GM12878 (cell line): ENCODE measurements at regions of chr11 and their contacts with region 1.

Region 1: DNA sequence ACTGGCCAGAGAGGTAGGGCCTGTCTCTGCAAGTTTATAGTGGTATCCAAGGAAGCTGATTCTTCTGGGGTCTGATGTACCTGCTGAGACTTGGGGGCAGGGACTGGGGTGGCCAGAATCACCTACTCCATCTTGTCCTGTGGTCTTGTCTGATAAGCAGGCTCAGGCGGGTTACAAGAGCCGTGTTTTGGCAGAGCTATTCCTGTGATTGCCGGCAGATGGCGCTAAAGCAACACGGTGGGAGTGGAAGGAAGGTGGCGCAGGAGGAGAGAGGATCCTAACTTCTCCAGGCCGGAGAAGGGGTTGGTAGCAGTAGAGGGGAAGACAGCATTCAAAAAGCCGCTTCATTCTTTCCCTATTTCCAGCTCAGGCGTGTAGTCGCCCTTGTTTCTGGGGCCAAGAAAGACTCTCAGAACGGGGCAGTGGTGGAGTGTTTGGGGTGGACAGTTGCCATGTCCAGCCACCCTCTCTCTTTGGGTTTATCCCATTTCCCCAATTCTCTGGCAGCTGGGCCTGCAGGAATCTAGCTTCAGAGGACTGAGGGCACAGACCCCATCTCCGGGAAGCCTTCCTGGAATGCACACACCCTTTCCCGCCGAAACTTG is 15.1 kb downstream of the CHRM1 start:
- DNase-seq: peak; percentile 46
- ATAC-seq: peak; percentile 92
- H3K4me3 ChIP-seq: no peak overlapping the region
- H3K27ac ChIP-seq: no peak overlapping the region
- H3K4me1 ChIP-seq: peaks cover 10% of the 10 kb centered on the region
- H3K27me3 ChIP-seq: peaks cover 0 to 3% of the 10 kb centered on the region in 2 experiments
- CTCF ChIP-seq: peak; percentile 99
- EP300 ChIP-seq: no peak
- POLR2A ChIP-seq: no peak
- RAD21 ChIP-seq: peak; percentile 99

Region 2: GRCh38 chr11:62880803-62881578 is 25.0 kb before region 1 on chr11 and contains the start of gene SLC3A2:
- CTCF ChIA-PET with region 1: interaction called, 16 read pairs
- POLR2A ChIA-PET with region 1: interaction called, 3 read pairs
- RAD21 ChIA-PET with region 1: no interaction called
- SMC1A ChIA-PET with region 1: interaction called, 3 read pairs
- in situ Hi-C with region 1: no loop called
- intact Hi-C with region 1: no loop called
- DNase-seq: peak; percentile 47
- ATAC-seq: peak; percentile 92
- H3K4me3 ChIP-seq: peak within 1 kb of the TSS; percentile 91
- H3K27ac ChIP-seq: peak within 1 kb of the TSS; percentile 95
- H3K4me1 ChIP-seq: peaks cover 15% of the 10 kb centered on the region
- H3K27me3 ChIP-seq: no peaks in the 10 kb centered on the region
- CTCF ChIP-seq: peak; percentile 64 to 86 (median 83)
- EP300 ChIP-seq: peak in 1 of 2 experiments; percentile 17; a peak in 1 of 4 replicates
- POLR2A ChIP-seq: peak; percentile 94
- RAD21 ChIP-seq: peak; percentile 58
- polyA plus RNA-seq, gene SLC3A2: 6.9 to 17.0 TPM

Region 3: DNA sequence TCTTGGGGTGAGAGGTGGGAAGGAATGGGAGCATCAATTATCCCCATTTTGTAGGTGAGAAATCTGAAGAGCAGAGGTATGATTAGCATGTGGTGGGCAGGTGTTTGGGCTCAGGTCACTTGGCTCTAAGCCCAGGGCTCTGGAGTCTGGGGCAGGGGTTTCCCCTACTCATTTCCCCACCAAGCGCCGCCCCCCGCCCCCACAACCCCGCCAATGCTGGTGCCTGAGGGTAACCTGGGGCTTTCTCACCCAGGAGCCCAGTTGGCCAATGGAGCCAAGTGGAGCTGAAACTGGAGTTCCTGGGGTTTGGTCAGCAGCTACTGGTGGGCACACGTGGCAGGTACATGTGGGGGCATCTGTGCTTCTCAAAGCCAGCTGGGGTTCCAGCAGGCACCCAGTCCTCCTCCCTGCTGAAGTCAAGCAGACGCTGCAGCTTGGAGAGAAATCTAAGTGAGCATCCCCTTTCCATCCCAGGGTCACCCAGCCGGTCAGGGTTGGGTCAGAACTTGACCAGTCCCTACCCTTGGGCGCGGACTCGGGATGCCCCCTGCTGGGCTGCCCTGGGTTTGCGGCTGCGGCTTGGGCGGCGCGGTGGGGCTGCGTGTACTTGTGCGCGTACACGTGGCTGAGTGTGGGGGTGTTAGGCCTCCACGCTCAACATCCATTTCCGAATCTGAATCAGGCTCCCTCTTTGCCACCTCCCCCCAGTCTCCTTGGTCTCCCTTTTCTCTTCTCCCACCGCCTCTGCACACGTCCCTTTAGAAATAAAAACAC is 16.8 kb after region 1 on chr11:
- CTCF ChIA-PET with region 1: interaction called, 45 read pairs
- POLR2A ChIA-PET with region 1: interaction called, 3 read pairs
- RAD21 ChIA-PET with region 1: interaction called, 5 read pairs
- SMC1A ChIA-PET with region 1: interaction called, 8 read pairs
- in situ Hi-C with region 1: no loop called
- intact Hi-C with region 1: no loop called
- DNase-seq: no peak
- ATAC-seq: peak; percentile 73
- H3K4me3 ChIP-seq: no peak overlapping the region
- H3K27ac ChIP-seq: no peak overlapping the region
- H3K4me1 ChIP-seq: peaks cover 19% of the 10 kb centered on the region
- H3K27me3 ChIP-seq: peaks cover 12 to 20% of the 10 kb centered on the region in 2 experiments
- CTCF ChIP-seq: peak; percentile 31 to 57 (median 45)
- EP300 ChIP-seq: no peak
- POLR2A ChIP-seq: no peak
- RAD21 ChIP-seq: peak; percentile 28; the same call in 1 of the 2 replicates

Region 4: DNA sequence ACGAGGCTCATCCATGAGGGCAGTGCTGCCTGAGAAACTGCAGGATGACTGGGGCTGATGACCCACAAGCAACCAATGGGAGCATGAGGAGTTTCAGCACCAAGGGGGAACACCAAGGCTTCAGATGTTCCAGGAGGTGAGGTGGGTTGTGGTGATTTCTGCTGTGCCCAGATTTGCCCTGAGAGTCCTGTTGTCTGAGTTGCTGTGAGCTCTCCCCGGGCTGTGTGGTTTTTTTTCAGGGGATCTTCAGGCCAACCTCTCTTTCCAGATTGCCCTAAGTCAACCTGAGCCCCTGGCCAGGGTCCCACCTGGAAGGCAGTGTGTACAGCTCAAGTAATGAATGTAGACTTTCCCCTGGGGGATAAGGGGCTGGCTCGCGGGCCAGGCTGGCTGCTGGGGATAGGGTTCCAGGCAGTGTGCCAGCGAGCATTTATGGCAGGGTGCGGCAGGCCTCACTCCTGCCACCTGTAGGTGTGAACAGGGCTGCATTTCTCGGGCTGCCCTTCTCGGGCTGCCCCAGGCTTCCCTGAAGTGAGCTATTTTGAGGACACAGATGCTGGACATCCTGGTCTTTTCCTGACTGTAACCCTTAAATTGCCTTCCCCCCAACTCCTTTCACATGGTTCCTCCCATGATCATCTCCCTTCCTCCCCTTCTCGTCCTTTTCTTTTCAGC is 69.0 kb after region 1 on chr11:
- CTCF ChIA-PET with region 1: interaction called, 31 read pairs
- POLR2A ChIA-PET with region 1: no interaction called
- RAD21 ChIA-PET with region 1: interaction called, 12 read pairs
- SMC1A ChIA-PET with region 1: interaction called, 3 read pairs
- in situ Hi-C with region 1: no loop called
- intact Hi-C with region 1: loop called (anchors 10 kb)
- DNase-seq: no peak
- ATAC-seq: peak; percentile 78
- H3K4me3 ChIP-seq: no peak overlapping the region
- H3K27ac ChIP-seq: no peak overlapping the region
- H3K4me1 ChIP-seq: no peaks in the 10 kb centered on the region
- H3K27me3 ChIP-seq: no peaks in the 10 kb centered on the region
- CTCF ChIP-seq: peak; percentile 24 to 38 (median 33); a peak in 4 of 6 replicates
- EP300 ChIP-seq: no peak
- POLR2A ChIP-seq: no peak
- RAD21 ChIP-seq: no peak

Region 5: GRCh38 chr11:63023841-63024648 is 118.0 kb after region 1 on chr11:
- CTCF ChIA-PET with region 1: interaction called, 327 read pairs
- POLR2A ChIA-PET with region 1: interaction called, 4 read pairs
- RAD21 ChIA-PET with region 1: interaction called, 71 read pairs
- SMC1A ChIA-PET with region 1: interaction called, 116 read pairs
- in situ Hi-C with region 1: loop called (anchors 5 kb)
- intact Hi-C with region 1: loop called (anchors 1 kb)
- DNase-seq: no peak
- ATAC-seq: peak; percentile 97
- H3K4me3 ChIP-seq: no peak overlapping the region
- H3K27ac ChIP-seq: no peak overlapping the region
- H3K4me1 ChIP-seq: peaks cover 3% of the 10 kb centered on the region; the same call in 1 of the 2 replicates
- H3K27me3 ChIP-seq: no peaks in the 10 kb centered on the region
- CTCF ChIP-seq: peak; percentile 98 to 100 (median 99)
- EP300 ChIP-seq: no peak
- POLR2A ChIP-seq: no peak
- RAD21 ChIP-seq: peak; percentile 90

Region 6: DNA sequence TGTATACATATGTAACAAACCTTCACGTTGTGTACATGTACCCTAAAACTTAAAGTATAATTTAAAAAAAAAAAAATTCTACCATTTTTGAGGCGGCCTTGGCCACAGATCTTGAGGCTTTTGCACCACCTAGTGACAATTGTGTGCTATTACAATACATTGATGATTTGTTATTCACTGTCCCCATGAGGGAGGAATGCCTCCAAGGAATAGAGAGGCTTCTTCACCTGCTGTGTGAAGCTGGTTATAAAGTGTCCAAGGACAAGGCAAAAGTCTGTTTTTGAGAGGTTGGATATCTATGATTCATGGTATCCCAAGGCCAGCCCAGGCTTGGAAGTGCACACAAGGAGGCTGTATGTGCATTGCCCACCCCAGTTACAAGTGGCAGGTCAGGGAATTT is 306.7 kb after region 1 on chr11:
- CTCF ChIA-PET with region 1: interaction called, 13 read pairs
- POLR2A ChIA-PET with region 1: no interaction called
- RAD21 ChIA-PET with region 1: interaction called, 4 read pairs
- SMC1A ChIA-PET with region 1: interaction called, 8 read pairs
- in situ Hi-C with region 1: loop called (anchors 5 kb)
- intact Hi-C with region 1: loop called (anchors 5 kb)
- DNase-seq: no peak
- ATAC-seq: no peak; the same call in 2 of the 3 replicates
- H3K4me3 ChIP-seq: no peak overlapping the region
- H3K27ac ChIP-seq: no peak overlapping the region
- H3K4me1 ChIP-seq: no peaks in the 10 kb centered on the region
- H3K27me3 ChIP-seq: no peaks in the 10 kb centered on the region
- CTCF ChIP-seq: peak; percentile 42 to 51 (median 43); a peak in 4 of 6 replicates
- EP300 ChIP-seq: no peak
- POLR2A ChIP-seq: no peak
- RAD21 ChIP-seq: peak; percentile 51